ENCODE measurements at regions of chr3 and their contacts with region 1.

Region 1: DNA sequence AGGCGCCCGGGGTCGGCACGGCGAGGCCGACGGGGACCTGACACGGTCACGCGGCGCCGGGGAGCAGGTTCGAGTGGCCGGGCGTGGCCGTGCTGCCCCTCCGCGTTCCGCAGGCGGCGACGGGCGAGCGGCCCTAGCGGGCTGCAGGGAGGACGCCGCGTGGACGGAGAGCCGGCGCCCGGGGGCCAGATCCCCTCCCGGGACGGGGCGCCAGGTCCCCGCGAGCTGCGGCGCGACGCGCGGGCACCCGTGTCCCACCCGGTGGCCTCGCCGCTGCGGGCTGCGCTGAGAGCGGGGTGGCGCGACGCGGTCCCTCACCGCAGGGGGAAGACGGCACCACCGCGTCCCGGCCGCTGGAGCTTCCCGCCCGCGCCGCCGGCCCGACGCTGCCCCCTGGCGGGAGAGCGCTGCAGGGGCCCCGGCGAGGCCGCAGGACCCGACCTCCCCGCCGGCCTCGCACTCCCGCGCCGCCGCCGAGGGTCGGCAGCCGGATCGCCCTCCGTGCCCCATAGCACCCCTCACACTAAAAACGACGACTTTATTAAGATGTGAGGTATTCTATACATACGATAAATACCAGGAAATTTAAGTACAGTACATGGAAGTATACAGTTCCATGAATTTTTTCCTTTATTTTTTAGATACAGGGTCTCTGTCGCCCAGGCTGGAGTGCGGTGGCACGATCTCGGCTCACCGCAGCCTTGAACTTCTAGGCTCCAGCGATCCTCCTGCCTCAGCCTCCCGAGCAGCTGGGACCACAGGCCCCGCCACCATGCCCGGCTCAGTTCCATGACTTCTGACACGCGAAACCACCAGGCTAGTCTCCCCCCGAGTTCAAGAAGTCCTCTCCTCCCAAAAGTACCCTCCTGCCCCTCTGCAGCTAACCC is 1.3 kb upstream of the PIGZ start:
- DNase-seq: peak; percentile 38 to 91 (median 68)
- ATAC-seq: peak; percentile 86 to 94 (median 92)
- H3K4me3 ChIP-seq: peak overlapping the region; percentile 69 to 91 (median 86)
- H3K27ac ChIP-seq: no peak overlapping the region
- H3K4me1 ChIP-seq: peaks cover 0 to 4% (median 0%) of the 10 kb centered on the region in 3 donors
- H3K27me3 ChIP-seq: no peaks in the 10 kb centered on the region
- CTCF ChIP-seq: peak; percentile 76 to 94 (median 84)

Region 2: GRCh38 chr3:196837819-196838420 is 132.0 kb before region 1 on chr3:
- intact Hi-C with region 1: loop called in 1 of 3 experiments (anchors 5 kb)
- DNase-seq: peak; percentile 44 to 72 (median 60)
- ATAC-seq: peak; percentile 82 to 99 (median 96)
- H3K4me3 ChIP-seq: no peak overlapping the region
- H3K27ac ChIP-seq: no peak overlapping the region
- H3K4me1 ChIP-seq: no peaks in the 10 kb centered on the region
- H3K27me3 ChIP-seq: no peaks in the 10 kb centered on the region
- CTCF ChIP-seq: peak; percentile 54 to 83 (median 71)

Measured in pancreas (tissue), 10 donors.